ENCODE measurements at regions of chr11 and their contacts with region 1.

Region 1: DNA sequence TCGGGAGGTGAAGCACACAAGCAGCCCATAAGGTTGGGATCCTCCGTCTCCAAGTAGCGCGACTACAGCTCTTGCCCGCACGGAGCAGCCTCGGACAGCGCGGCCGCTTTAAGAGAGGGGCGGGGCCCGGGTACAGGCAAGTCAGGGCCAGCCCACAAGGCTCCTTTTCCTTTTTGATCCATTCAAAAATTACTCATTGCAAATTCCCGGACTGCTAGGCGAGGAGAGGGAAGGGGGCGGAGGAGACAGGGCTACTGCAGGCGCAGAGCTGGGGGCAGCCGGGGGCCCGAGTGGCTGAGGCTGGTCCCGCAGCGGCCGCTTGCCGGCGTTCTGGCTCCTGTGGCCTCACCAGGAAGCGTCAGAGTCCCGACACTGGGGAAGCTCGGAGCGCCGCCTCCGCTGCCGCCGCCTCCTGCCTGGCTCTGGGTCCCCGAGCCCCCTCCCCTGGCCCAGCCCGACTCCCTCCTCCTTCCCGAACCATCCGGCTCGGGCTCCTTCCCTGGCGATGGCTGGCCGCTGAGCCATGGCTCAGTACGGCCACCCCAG is at the start of gene UBASH3B:
- DNase-seq: peak; percentile 39 to 74 (median 60)
- H3K4me3 ChIP-seq: peak within 1 kb of the TSS; percentile 82
- H3K4me3 Mint-ChIP-seq: peak within 1 kb of the TSS; percentile 94 to 99 (median 98)
- H3K27ac ChIP-seq: peak within 1 kb of the TSS; percentile 54
- H3K27ac Mint-ChIP-seq: peak within 1 kb of the TSS; percentile 87 to 95 (median 92)
- H3K4me1 ChIP-seq: peaks cover 41% of the 10 kb centered on the region
- H3K4me1 Mint-ChIP-seq: peaks cover 44 to 52% (median 47%) of the 10 kb centered on the region in 3 donors
- H3K27me3 ChIP-seq: no peaks in the 10 kb centered on the region
- H3K27me3 Mint-ChIP-seq: peaks cover 0 to 5% of the 10 kb centered on the region in 2 donors
- total RNA-seq, gene UBASH3B: 34.6 to 36.4 TPM

Region 2: DNA sequence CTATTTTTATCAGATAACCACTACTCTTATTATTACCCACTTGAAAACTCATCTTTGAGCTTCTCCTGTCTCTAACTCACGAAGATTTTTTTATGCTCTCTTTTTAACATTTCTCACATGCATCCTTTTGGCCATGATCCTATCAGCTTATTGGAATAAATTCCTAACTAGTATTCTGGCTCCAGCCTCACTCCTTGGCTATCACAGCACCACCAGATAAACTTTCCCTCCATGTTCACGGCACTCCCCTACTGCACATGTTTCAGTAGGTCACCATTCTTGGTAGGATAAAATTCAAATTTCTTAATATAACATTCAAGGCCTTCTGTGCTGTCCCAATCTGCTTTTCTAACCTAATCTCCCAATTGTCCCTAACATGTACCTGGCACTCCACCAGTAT is 186.6 kb before region 1 on chr11:
- CTCF ChIA-PET with region 1: no interaction called
- POLR2A ChIA-PET with region 1: no interaction called
- DNase-seq: no peak
- H3K4me3 ChIP-seq: no peak overlapping the region
- H3K4me3 Mint-ChIP-seq: no peak overlapping the region
- H3K27ac ChIP-seq: no peak overlapping the region
- H3K27ac Mint-ChIP-seq: no peak overlapping the region
- H3K4me1 ChIP-seq: no peaks in the 10 kb centered on the region
- H3K4me1 Mint-ChIP-seq: no peaks in the 10 kb centered on the region
- H3K27me3 ChIP-seq: no peaks in the 10 kb centered on the region
- H3K27me3 Mint-ChIP-seq: peaks cover 0 to 20% of the 10 kb centered on the region in 2 donors

Region 3: GRCh38 chr11:122516686-122517085 is 138.9 kb before region 1 on chr11:
- CTCF ChIA-PET with region 1: no interaction called
- POLR2A ChIA-PET with region 1: no interaction called
- DNase-seq: no peak
- H3K4me3 ChIP-seq: no peak overlapping the region
- H3K4me3 Mint-ChIP-seq: no peak overlapping the region
- H3K27ac ChIP-seq: no peak overlapping the region
- H3K27ac Mint-ChIP-seq: no peak overlapping the region
- H3K4me1 ChIP-seq: no peaks in the 10 kb centered on the region
- H3K4me1 Mint-ChIP-seq: no peaks in the 10 kb centered on the region
- H3K27me3 ChIP-seq: peaks cover 4% of the 10 kb centered on the region
- H3K27me3 Mint-ChIP-seq: peaks cover 2 to 24% of the 10 kb centered on the region in 2 donors

Region 4: GRCh38 chr11:122617297-122617696 is 38.3 kb before region 1 on chr11:
- CTCF ChIA-PET with region 1: no interaction called
- POLR2A ChIA-PET with region 1: no interaction called
- DNase-seq: no peak
- H3K4me3 ChIP-seq: no peak overlapping the region
- H3K4me3 Mint-ChIP-seq: no peak overlapping the region
- H3K27ac ChIP-seq: no peak overlapping the region
- H3K27ac Mint-ChIP-seq: no peak overlapping the region
- H3K4me1 ChIP-seq: no peaks in the 10 kb centered on the region
- H3K4me1 Mint-ChIP-seq: no peaks in the 10 kb centered on the region
- H3K27me3 ChIP-seq: no peaks in the 10 kb centered on the region
- H3K27me3 Mint-ChIP-seq: peaks cover 0 to 4% of the 10 kb centered on the region in 2 donors

Region 5: DNA sequence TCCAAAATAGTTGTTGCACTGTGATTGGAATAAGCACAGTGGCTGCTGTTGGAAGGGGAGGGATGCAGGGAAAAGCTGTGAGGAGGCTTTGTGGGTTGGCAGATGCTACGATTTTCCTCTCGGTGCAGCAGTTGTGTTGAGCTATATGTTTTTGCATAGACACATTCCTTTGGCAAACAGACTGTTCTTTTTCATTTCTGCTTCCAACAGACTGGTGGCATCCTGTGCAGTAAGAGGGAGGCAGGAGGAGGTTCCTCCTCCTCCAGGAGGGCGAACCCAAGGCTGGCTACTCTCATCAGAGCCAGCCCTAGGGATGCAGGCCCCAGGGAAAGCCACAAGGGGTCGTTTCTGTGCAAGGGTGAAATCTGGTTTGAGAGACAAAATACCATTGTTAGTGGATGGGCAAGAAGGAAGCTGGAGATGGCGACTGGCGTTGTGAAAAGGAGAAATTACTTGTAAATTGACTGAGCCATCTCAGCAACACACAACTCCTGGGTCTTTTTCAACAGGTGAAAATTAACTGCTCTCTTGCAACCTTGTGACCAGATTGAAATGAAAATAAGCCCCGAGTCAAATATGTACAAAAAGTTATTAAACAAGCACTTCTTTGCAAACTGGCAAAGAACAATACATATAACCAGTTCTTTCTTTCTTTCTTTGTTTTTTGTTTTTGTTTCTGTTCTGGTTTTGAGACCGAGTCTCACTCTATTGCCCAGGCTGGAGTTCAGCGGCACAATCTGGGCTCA is 26.6 kb before region 1 on chr11:
- CTCF ChIA-PET with region 1: interaction called, 15 read pairs
- POLR2A ChIA-PET with region 1: interaction called, 4 read pairs
- DNase-seq: peak; percentile 39 to 76 (median 42)
- H3K4me3 ChIP-seq: no peak overlapping the region
- H3K4me3 Mint-ChIP-seq: peak overlapping the region in 1 of 7 donors; percentile 15
- H3K27ac ChIP-seq: no peak overlapping the region
- H3K27ac Mint-ChIP-seq: peak overlapping the region in 1 of 8 donors; percentile 41
- H3K4me1 ChIP-seq: no peaks in the 10 kb centered on the region
- H3K4me1 Mint-ChIP-seq: peaks cover 5 to 12% (median 7%) of the 10 kb centered on the region in 3 donors
- H3K27me3 ChIP-seq: no peaks in the 10 kb centered on the region
- H3K27me3 Mint-ChIP-seq: peaks cover 0 to 6% of the 10 kb centered on the region in 2 donors

Region 6: GRCh38 chr11:122668562-122669090 is 13.0 kb after region 1 on chr11:
- CTCF ChIA-PET with region 1: interaction called, 42 read pairs
- POLR2A ChIA-PET with region 1: interaction called, 27 read pairs
- DNase-seq: peak in 2 of 5 donors; percentile 41 to 51
- H3K4me3 ChIP-seq: peak overlapping the region; percentile 27
- H3K4me3 Mint-ChIP-seq: peak overlapping the region in 6 of 7 donors; percentile 25 to 78 (median 52)
- H3K27ac ChIP-seq: no peak overlapping the region
- H3K27ac Mint-ChIP-seq: peak overlapping the region; percentile 33 to 94 (median 88)
- H3K4me1 ChIP-seq: peaks cover 63% of the 10 kb centered on the region
- H3K4me1 Mint-ChIP-seq: peaks cover 57 to 81% (median 71%) of the 10 kb centered on the region in 3 donors
- H3K27me3 ChIP-seq: no peaks in the 10 kb centered on the region
- H3K27me3 Mint-ChIP-seq: no peaks in the 10 kb centered on the region

Region 7: GRCh38 chr11:122673701-122674100 is 18.1 kb after region 1 on chr11:
- CTCF ChIA-PET with region 1: interaction called, 42 read pairs
- POLR2A ChIA-PET with region 1: interaction called, 27 read pairs
- DNase-seq: no peak
- H3K4me3 ChIP-seq: no peak overlapping the region
- H3K4me3 Mint-ChIP-seq: no peak overlapping the region
- H3K27ac ChIP-seq: no peak overlapping the region
- H3K27ac Mint-ChIP-seq: peak overlapping the region in 3 of 8 donors; percentile 8 to 42 (median 34)
- H3K4me1 ChIP-seq: peaks cover 71% of the 10 kb centered on the region
- H3K4me1 Mint-ChIP-seq: peaks cover 67 to 84% (median 76%) of the 10 kb centered on the region in 3 donors
- H3K27me3 ChIP-seq: no peaks in the 10 kb centered on the region
- H3K27me3 Mint-ChIP-seq: no peaks in the 10 kb centered on the region

Region 8: DNA sequence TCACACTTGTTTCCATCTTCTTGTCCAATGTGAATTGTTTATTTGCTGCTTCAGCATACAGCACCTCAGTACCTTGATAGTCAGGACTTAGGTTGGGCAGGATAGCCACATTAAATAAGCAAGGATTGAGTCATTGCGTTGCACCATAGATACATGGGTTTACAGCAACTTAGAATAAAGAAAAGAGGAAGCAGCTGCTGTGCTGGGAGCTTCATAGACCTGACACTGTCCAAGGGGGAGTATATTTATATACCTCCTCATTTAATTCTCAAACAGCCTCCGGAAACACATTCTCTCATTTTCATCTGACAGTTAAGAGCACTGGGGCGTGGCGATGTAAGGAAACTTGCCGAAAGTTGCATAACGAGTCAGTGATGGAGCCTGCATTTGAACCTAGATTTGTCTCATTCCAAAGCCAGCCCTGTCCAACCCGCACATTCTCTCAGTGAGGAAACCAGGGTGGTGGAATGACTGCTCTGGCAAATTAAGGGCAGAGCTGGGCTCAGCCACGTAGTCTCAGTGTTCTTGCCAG is 42.1 kb after region 1 on chr11:
- CTCF ChIA-PET with region 1: interaction called, 23 read pairs
- POLR2A ChIA-PET with region 1: interaction called, 12 read pairs
- DNase-seq: peak in 3 of 5 donors; percentile 26 to 60 (median 56)
- H3K4me3 ChIP-seq: peak overlapping the region; percentile 45
- H3K4me3 Mint-ChIP-seq: peak overlapping the region; percentile 31 to 87 (median 76)
- H3K27ac ChIP-seq: no peak overlapping the region
- H3K27ac Mint-ChIP-seq: peak overlapping the region; percentile 84 to 99 (median 93)
- H3K4me1 ChIP-seq: peaks cover 66% of the 10 kb centered on the region
- H3K4me1 Mint-ChIP-seq: peaks cover 75 to 87% (median 86%) of the 10 kb centered on the region in 3 donors
- H3K27me3 ChIP-seq: no peaks in the 10 kb centered on the region
- H3K27me3 Mint-ChIP-seq: no peaks in the 10 kb centered on the region

Region 9: GRCh38 chr11:122743949-122744348 is 88.3 kb after region 1 on chr11:
- CTCF ChIA-PET with region 1: interaction called, 13 read pairs
- POLR2A ChIA-PET with region 1: interaction called, 9 read pairs
- DNase-seq: peak; percentile 50 to 88 (median 74)
- H3K4me3 ChIP-seq: peak overlapping the region; percentile 36
- H3K4me3 Mint-ChIP-seq: no peak overlapping the region
- H3K27ac ChIP-seq: peak overlapping the region; percentile 26
- H3K27ac Mint-ChIP-seq: no peak overlapping the region
- H3K4me1 ChIP-seq: peaks cover 70% of the 10 kb centered on the region
- H3K4me1 Mint-ChIP-seq: peaks cover 9 to 24% (median 21%) of the 10 kb centered on the region in 3 donors
- H3K27me3 ChIP-seq: no peaks in the 10 kb centered on the region
- H3K27me3 Mint-ChIP-seq: no peaks in the 10 kb centered on the region

Region 10: DNA sequence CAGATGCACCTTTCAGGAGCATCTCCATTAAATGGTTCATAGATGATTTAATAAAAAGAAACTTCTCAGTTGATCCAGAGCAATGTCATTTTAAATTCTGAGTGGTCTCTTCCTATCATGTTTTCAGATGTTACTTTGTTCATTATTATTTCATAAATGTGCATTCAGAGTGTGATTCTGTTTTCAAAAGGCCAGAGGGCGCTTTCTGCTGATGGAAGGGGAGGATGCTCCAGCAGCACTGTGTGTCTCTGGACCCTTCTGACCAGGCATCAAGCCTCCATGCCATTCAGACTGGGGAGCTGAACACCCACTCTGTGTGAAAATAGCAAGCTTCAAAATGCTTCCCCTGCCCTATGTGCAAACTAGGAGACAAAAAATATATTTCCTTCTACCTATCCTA is 158.8 kb after region 1 on chr11:
- CTCF ChIA-PET with region 1: no interaction called
- POLR2A ChIA-PET with region 1: no interaction called
- DNase-seq: no peak
- H3K4me3 ChIP-seq: no peak overlapping the region
- H3K4me3 Mint-ChIP-seq: no peak overlapping the region
- H3K27ac ChIP-seq: no peak overlapping the region
- H3K27ac Mint-ChIP-seq: peak overlapping the region in 1 of 8 donors; percentile 29
- H3K4me1 ChIP-seq: peaks cover 8% of the 10 kb centered on the region
- H3K4me1 Mint-ChIP-seq: peaks cover 18 to 29% (median 22%) of the 10 kb centered on the region in 3 donors
- H3K27me3 ChIP-seq: no peaks in the 10 kb centered on the region
- H3K27me3 Mint-ChIP-seq: no peaks in the 10 kb centered on the region